Esophagus squamous epithelium (tissue), 5 donors: ENCODE measurements at regions of chr9 and their contacts with region 1.

Region 1: GRCh38 chr9:36166101-36166927 is 2.9 kb upstream of the CCIN start:
- DNase-seq: no peak
- H3K4me3 ChIP-seq: peak overlapping the region; percentile 22 to 63 (median 52)
- H3K27ac ChIP-seq: peak overlapping the region; percentile 47 to 80 (median 72)
- H3K4me1 ChIP-seq: peaks cover 7 to 48% (median 20%) of the 10 kb centered on the region in 3 donors
- H3K27me3 ChIP-seq: peaks cover 0 to 11% (median 0%) of the 10 kb centered on the region in 4 donors
- CTCF ChIP-seq: peak; percentile 82 to 94 (median 91)
- POLR2A ChIP-seq: no peak

Region 2: GRCh38 chr9:36102742-36103495 is 63.4 kb before region 1 on chr9:
- intact Hi-C with region 1: loop called (anchors 2 kb)
- DNase-seq: peak; percentile 38
- H3K4me3 ChIP-seq: no peak overlapping the region
- H3K27ac ChIP-seq: no peak overlapping the region
- H3K4me1 ChIP-seq: peaks cover 0 to 10% (median 0%) of the 10 kb centered on the region in 3 donors
- H3K27me3 ChIP-seq: no peaks in the 10 kb centered on the region
- CTCF ChIP-seq: peak; percentile 71 to 85 (median 82)
- POLR2A ChIP-seq: no peak

Region 3: GRCh38 chr9:36499174-36499890 is 333.0 kb after region 1 on chr9:
- intact Hi-C with region 1: no loop called
- DNase-seq: no peak
- H3K4me3 ChIP-seq: no peak overlapping the region
- H3K27ac ChIP-seq: no peak overlapping the region
- H3K4me1 ChIP-seq: no peaks in the 10 kb centered on the region
- H3K27me3 ChIP-seq: no peaks in the 10 kb centered on the region
- CTCF ChIP-seq: no peak
- POLR2A ChIP-seq: no peak

Region 4: DNA sequence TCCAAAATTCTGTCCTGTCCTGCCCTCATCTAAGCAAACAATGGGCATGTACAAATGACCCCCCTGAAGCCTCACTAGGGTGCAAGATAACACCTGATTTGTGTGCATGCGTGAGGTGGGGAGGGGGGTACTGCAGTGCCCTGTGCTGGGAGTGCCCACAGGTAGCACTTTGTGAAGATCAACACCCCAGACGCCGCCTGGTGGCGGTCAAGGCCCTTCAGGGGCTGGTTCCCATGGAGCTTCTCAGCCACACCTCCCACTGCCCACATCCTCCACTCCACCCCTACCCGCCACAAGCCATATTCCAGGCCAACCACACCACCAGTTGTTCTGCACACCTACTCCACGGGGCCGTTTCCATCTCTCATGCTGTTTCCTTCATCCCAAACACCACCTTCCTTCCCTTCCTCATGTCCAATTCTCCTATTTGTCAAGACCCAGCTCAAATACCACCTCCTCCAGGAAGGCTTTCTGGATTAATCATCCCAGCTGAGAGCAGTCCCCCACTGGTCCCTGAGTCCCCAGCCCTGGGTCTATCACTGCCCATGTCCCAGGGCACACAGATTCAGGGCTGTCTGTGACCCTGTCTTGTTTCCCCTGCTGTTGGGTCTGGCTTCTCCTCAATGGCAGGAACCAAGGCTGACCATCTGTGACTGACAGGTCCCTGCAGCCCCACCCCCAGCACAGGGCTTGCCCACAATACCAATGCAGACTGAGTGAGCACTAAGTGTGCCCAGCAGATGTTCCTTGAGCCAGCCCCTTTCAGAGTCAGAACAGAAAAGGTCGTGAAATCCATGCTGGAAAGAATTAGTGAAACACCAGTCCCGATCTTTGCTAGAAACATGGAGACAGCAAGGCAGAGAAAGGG is 689.4 kb after region 1 on chr9:
- intact Hi-C with region 1: no loop called
- DNase-seq: no peak
- H3K4me3 ChIP-seq: no peak overlapping the region
- H3K27ac ChIP-seq: no peak overlapping the region
- H3K4me1 ChIP-seq: peaks cover 0 to 8% (median 0%) of the 10 kb centered on the region in 3 donors
- H3K27me3 ChIP-seq: peaks cover 0 to 53% (median 0%) of the 10 kb centered on the region in 4 donors
- CTCF ChIP-seq: no peak
- POLR2A ChIP-seq: no peak